HepG2 (cell line): ENCODE measurements at regions of chr14 and their contacts with region 1.

Region 1: DNA sequence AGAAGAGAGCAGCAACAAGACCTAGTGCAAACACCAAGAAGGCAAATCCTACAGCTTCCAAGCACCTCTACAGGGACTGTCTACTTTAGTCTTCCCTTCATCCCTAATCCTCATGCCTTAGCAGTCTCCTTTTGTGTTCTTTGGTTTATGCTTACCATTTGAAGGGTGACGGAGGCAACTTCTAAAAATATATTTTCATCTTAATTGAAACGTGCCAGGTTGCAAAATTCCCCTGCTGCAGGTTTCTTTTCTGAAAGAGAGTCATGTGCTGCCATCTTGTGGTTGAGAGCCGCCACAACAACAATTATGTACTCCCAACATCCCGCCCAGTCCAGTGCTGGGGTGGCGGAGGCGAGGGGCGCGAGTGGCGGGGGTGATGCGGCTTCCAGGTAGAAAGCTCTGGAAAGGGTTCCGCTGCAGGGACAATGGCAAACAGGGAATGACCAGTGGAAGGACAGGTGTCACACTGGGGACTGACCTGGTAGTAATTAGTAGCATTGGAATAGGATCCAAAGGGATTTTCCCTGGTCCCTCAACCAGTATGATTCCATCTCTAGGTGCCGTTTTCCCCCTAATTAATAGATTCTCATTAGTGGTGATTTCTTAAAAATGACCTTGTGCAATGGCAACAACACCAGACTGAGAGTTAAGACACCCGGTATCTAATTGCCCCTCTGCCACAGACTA is 80.3 kb upstream of the GNG2 start:
- DNase-seq: peak; percentile 50
- ATAC-seq: peak; percentile 83
- H3K4me3 ChIP-seq: no peak overlapping the region
- H3K27ac ChIP-seq: no peak overlapping the region
- H3K4me1 ChIP-seq: no peaks in the 10 kb centered on the region
- H3K27me3 ChIP-seq: peaks cover 0 to 4% of the 10 kb centered on the region in 2 experiments; a peak in 1 of 5 replicates
- CTCF ChIP-seq: peak; percentile 79
- EP300 ChIP-seq: no peak
- POLR2A ChIP-seq: no peak
- RAD21 ChIP-seq: peak; percentile 60; the same call in 1 of the 2 replicates

Region 2: DNA sequence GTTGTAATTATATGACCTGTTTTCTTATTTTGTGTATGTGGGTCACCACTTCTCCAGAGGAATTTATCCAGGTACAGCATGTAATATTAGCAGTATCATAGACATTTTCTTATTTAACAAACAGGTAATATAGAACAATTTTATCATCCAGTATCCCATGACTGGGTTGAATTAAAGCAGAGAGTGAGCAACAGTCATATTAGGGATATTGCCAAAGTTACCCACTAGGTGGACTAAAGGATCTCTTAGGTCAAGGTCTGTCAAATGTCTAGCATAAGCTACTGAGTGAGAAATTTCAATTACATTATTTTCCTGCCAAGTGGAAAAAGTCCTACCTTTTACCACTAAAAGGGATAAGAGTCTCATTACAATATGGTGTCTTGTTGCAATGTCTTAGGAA is 623.1 kb before region 1 on chr14:
- CTCF ChIA-PET with region 1: no interaction called
- POLR2A ChIA-PET with region 1: no interaction called
- in situ Hi-C with region 1: no loop called
- intact Hi-C with region 1: loop called (anchors 5 kb)
- DNase-seq: peak; percentile 10
- ATAC-seq: peak; percentile 65
- H3K4me3 ChIP-seq: no peak overlapping the region
- H3K27ac ChIP-seq: no peak overlapping the region
- H3K4me1 ChIP-seq: no peaks in the 10 kb centered on the region
- H3K27me3 ChIP-seq: no peaks in the 10 kb centered on the region; a peak in 1 of 5 replicates
- CTCF ChIP-seq: peak; percentile 15; the same call in 1 of the 2 replicates
- EP300 ChIP-seq: no peak
- POLR2A ChIP-seq: no peak
- RAD21 ChIP-seq: no peak

Region 3: GRCh38 chr14:51283402-51284085 is 496.6 kb before region 1 on chr14:
- CTCF ChIA-PET with region 1: interaction called, 25 read pairs
- POLR2A ChIA-PET with region 1: no interaction called
- in situ Hi-C with region 1: loop called (anchors 10 kb)
- intact Hi-C with region 1: loop called (anchors 1 kb)
- DNase-seq: peak; percentile 74
- ATAC-seq: peak; percentile 77
- H3K4me3 ChIP-seq: no peak overlapping the region
- H3K27ac ChIP-seq: no peak overlapping the region
- H3K4me1 ChIP-seq: no peaks in the 10 kb centered on the region
- H3K27me3 ChIP-seq: no peaks in the 10 kb centered on the region
- CTCF ChIP-seq: peak; percentile 68
- EP300 ChIP-seq: no peak
- POLR2A ChIP-seq: no peak
- RAD21 ChIP-seq: peak; percentile 58; the same call in 1 of the 2 replicates

Region 4: DNA sequence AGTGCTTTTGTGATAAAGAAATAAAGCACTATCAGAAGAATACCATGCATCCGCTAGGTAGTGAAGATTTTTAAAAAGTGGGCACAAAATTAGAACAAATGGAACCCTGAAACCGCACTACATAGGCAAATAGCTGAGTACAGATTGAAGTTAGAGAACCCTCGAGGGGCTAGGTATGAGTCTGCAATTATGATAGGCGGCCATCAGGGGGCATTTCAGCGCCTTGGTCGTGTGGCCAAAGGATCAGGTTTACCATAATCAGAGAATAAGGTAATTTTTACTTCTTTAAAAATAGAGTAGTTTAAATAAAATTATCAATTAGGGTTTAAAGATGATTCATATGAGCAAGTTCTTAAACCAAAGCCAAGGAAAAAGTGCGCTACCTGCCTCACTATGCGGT is 410.3 kb before region 1 on chr14:
- CTCF ChIA-PET with region 1: interaction called, 8 read pairs
- POLR2A ChIA-PET with region 1: no interaction called
- in situ Hi-C with region 1: loop called (anchors 10 kb)
- intact Hi-C with region 1: loop called (anchors 1 kb)
- DNase-seq: no peak
- ATAC-seq: no peak
- H3K4me3 ChIP-seq: no peak overlapping the region
- H3K27ac ChIP-seq: no peak overlapping the region
- H3K4me1 ChIP-seq: no peaks in the 10 kb centered on the region; the same call in 1 of the 2 replicates
- H3K27me3 ChIP-seq: peaks cover 0 to 2% of the 10 kb centered on the region in 2 experiments; a peak in 2 of 5 replicates
- CTCF ChIP-seq: peak; percentile 50
- EP300 ChIP-seq: no peak
- POLR2A ChIP-seq: no peak
- RAD21 ChIP-seq: peak; percentile 9; the same call in 1 of the 2 replicates

Region 5: GRCh38 chr14:51554953-51555352 is 225.2 kb before region 1 on chr14:
- CTCF ChIA-PET with region 1: interaction called, 3 read pairs
- POLR2A ChIA-PET with region 1: no interaction called
- in situ Hi-C with region 1: loop called (anchors 10 kb)
- intact Hi-C with region 1: loop called (anchors 2 kb)
- DNase-seq: no peak
- ATAC-seq: no peak
- H3K4me3 ChIP-seq: no peak overlapping the region
- H3K27ac ChIP-seq: no peak overlapping the region
- H3K4me1 ChIP-seq: no peaks in the 10 kb centered on the region
- H3K27me3 ChIP-seq: 0 out of 5 replicates have a peak, but pooled peaks cover 0 to 5% of the 10 kb centered on the region in 2 experiments
- CTCF ChIP-seq: peak; percentile 47
- EP300 ChIP-seq: no peak
- POLR2A ChIP-seq: no peak
- RAD21 ChIP-seq: no peak

Region 6: GRCh38 chr14:51651388-51652167 is 128.6 kb before region 1 on chr14 and contains the start of gene FRMD6:
- CTCF ChIA-PET with region 1: interaction called, 3 read pairs
- POLR2A ChIA-PET with region 1: no interaction called
- in situ Hi-C with region 1: loop called (anchors 10 kb)
- intact Hi-C with region 1: loop called (anchors 2 kb)
- DNase-seq: peak; percentile 68
- ATAC-seq: peak; percentile 84
- H3K4me3 ChIP-seq: peak within 1 kb of the TSS; percentile 88 to 96 (median 93)
- H3K27ac ChIP-seq: peak within 1 kb of the TSS; percentile 85
- H3K4me1 ChIP-seq: peaks cover 36% of the 10 kb centered on the region
- H3K27me3 ChIP-seq: no peaks in the 10 kb centered on the region; a peak in 1 of 5 replicates
- CTCF ChIP-seq: peak; percentile 75
- EP300 ChIP-seq: no peak
- POLR2A ChIP-seq: peak; percentile 57 to 60; a peak in 3 of 4 replicates
- RAD21 ChIP-seq: peak; percentile 53
- total RNA-seq, gene FRMD6: 5.4 and 6.8 TPM in 2 replicates

Region 7: DNA sequence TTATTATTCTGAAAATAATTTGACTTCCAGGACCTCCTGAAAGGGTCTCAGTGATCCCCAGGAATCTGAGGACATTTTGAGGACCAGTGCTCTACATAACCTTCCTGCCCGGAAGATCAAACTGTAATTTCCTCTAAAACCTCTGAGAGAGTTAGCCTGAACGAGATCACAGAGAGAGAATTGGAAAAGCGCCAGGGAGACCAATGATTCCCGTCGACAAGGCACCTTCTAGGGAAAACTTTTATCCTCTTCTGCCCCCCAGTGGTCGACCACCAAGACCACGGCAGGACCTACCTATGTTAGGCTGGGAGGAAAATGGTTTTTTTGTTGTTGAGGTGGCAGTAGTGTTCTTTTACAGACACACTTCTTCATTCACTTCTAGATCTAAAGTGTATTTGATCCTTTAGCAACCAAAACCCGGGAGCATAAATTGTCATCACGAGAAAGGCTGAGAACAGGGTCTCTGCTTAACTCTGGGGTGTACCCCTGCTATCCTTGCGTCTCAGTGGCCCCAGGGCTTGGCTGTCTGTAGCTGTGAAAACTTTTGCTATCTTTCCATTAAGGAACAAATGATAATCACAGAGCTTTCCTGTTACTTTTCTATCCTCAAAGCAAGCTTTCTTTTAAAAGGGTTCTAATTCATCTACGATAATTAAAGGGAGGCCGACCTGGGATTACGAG is 351.6 kb after region 1 on chr14:
- CTCF ChIA-PET with region 1: no interaction called
- POLR2A ChIA-PET with region 1: no interaction called
- in situ Hi-C with region 1: no loop called
- intact Hi-C with region 1: loop called (anchors 2 kb)
- DNase-seq: peak; percentile 80
- ATAC-seq: peak; percentile 94
- H3K4me3 ChIP-seq: no peak overlapping the region
- H3K27ac ChIP-seq: no peak overlapping the region
- H3K4me1 ChIP-seq: no peaks in the 10 kb centered on the region
- H3K27me3 ChIP-seq: 0 out of 5 replicates have a peak, but pooled peaks cover 0 to 2% of the 10 kb centered on the region in 2 experiments
- CTCF ChIP-seq: peak; percentile 86
- EP300 ChIP-seq: no peak
- POLR2A ChIP-seq: no peak
- RAD21 ChIP-seq: peak; percentile 74